Activated T-helper 2 cell treated with anti-CD3 and anti-CD28 coated beads, Interferon-gamma antibody, Interleukin-2, Interleukin-4, amounts not matched to agents 10 μg/mL and 5 μg/mL and 100 μg/mL, durations not matched to agents 14 hours and 24 hours and 36 hours (primary cell): ENCODE measurements at regions of chr22 and their contacts with region 1.

Region 1: GRCh38 chr22:40525249-40525884 is 111.2 kb downstream of the MRTFA start:
- DNase-seq: peak; percentile 51
- H3K4me3 Mint-ChIP-seq: no peak overlapping the region
- H3K27ac Mint-ChIP-seq: no peak overlapping the region
- H3K4me1 Mint-ChIP-seq: peaks cover 28% of the 10 kb centered on the region
- H3K27me3 Mint-ChIP-seq: no peaks in the 10 kb centered on the region

Region 2: GRCh38 chr22:40547729-40548172 is 22.4 kb after region 1 on chr22:
- intact Hi-C with region 1: no loop called
- DNase-seq: no peak
- H3K4me3 Mint-ChIP-seq: no peak overlapping the region
- H3K27ac Mint-ChIP-seq: no peak overlapping the region
- H3K4me1 Mint-ChIP-seq: peaks cover 3% of the 10 kb centered on the region
- H3K27me3 Mint-ChIP-seq: no peaks in the 10 kb centered on the region

Region 3: DNA sequence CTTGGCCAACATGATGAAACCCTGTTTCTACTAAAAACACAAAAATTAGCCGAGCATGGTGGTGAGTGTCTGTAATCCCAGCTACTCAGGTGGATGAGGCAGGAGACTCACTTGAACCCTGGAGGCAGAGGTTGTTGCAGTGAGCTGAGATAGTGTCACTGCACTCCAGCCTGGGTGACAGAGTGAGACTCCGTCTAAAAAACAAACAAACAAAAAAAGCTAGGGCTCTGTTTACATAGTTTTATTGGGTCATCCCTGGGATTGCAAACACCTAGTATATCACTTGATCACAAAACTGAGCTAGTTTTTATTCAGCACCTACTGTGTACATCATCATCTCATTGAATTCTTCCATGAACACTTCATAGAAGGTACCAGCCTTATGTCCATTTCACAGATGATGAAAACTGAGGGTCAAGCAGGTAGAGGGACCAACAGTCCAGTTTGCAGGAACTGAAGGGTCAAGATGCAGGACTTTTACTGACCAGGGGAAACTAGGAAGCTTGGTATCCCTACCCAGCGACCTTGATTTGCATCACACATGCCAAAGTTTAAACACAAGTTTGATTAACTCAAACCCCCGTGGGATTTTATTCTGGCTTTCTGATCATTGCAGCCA is 120.3 kb after region 1 on chr22:
- intact Hi-C with region 1: loop called (anchors 1 kb)
- DNase-seq: no peak
- H3K4me3 Mint-ChIP-seq: no peak overlapping the region
- H3K27ac Mint-ChIP-seq: no peak overlapping the region
- H3K4me1 Mint-ChIP-seq: peaks cover 6% of the 10 kb centered on the region
- H3K27me3 Mint-ChIP-seq: no peaks in the 10 kb centered on the region